ENCODE measurements at regions of chr7 and their contacts with region 1.

Region 1: GRCh38 chr7:143263266-143264195 is at the start of gene GSTK1:
- DNase-seq: peak; percentile 92
- H3K4me3 ChIP-seq: peak within 1 kb of the TSS; percentile 70
- H3K27ac ChIP-seq: peak within 1 kb of the TSS; percentile 93
- H3K4me1 ChIP-seq: peaks cover 14% of the 10 kb centered on the region
- H3K27me3 ChIP-seq: no peaks in the 10 kb centered on the region
- CTCF ChIP-seq: no peak
- total RNA-seq, gene GSTK1: 210 to 272 TPM

Region 2: DNA sequence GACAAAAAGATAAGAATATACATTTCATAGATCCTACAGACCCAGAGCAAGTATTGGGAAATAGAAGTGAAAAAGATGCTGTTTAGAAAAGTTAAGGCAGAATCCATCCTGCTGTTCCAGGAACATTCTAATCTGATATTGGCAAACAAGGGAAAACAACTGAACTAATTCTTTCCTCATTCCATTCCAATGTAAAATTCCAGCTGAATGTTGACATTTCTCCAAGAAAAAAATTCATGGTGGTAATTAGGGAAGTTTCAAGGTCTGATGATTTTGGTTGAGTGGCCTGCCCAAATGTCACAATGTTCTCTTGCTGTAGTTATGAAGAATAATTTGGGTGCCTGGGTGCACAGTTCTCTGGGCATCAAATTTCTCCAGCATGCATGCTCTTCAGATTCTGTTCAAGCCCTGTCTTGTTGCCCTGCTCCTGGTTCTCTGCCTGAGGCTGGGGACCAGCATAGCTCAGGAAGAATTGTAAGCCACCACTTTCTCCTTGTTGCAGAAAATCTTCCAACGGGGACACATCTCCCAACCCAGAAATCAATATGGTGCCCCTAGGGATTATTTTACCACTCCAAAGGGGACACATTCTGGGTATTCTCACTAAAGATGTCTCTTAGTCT is 116.3 kb before region 1 on chr7:
- intact Hi-C with region 1: no loop called
- DNase-seq: no peak
- H3K4me3 ChIP-seq: no peak overlapping the region
- H3K27ac ChIP-seq: no peak overlapping the region
- H3K4me1 ChIP-seq: no peaks in the 10 kb centered on the region
- H3K27me3 ChIP-seq: no peaks in the 10 kb centered on the region
- CTCF ChIP-seq: no peak

Region 3: GRCh38 chr7:143318656-143319055 is 55.1 kb after region 1 on chr7:
- intact Hi-C with region 1: no loop called
- DNase-seq: no peak
- H3K4me3 ChIP-seq: no peak overlapping the region
- H3K27ac ChIP-seq: no peak overlapping the region
- H3K4me1 ChIP-seq: no peaks in the 10 kb centered on the region
- H3K27me3 ChIP-seq: no peaks in the 10 kb centered on the region
- CTCF ChIP-seq: no peak

Region 4: GRCh38 chr7:143380255-143380645 is 116.7 kb after region 1 on chr7:
- intact Hi-C with region 1: loop called (anchors 10 kb)
- DNase-seq: peak; percentile 92
- H3K4me3 ChIP-seq: peak overlapping the region; percentile 89
- H3K27ac ChIP-seq: peak overlapping the region; percentile 100
- H3K4me1 ChIP-seq: peaks cover 7% of the 10 kb centered on the region
- H3K27me3 ChIP-seq: no peaks in the 10 kb centered on the region
- CTCF ChIP-seq: peak; percentile 89

Region 5: DNA sequence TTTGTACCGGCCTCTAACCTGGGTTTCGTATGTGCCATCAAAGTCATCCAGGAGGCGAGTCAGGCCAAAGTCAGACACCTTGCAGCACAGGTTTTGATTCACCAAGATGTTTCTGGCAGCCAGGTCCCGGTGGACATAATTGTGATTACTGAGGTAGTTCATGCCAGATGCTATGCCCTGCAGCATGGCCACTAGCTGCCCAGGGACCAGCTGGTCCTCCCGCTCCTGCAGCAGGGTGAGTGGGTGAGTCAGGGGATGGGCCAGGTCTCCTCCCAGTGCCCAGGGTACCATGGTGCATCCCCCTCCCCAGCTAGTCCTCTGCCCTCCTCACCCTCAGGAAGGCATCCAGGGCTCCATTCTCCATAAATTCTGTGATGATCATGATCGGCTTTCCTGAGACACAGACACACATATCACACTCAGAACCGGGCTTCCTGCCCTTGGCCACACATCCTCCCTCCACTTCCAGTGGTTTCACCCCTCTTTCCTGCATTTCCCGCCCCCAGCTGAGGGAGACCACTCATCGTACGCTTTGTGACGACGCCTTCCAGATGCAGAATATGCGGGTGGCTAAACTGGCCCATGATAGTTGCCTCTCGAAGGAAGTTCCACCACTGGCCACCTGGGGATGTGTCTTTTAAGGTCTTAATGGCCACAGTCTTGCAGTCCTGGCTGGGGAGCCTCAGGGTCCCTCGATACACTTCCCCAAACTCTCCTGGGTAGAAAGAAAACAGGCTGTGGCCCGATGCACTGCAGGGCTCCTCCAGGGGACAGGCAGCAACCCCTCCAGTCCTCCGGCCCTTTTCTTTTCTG is 131.5 kb after region 1 on chr7:
- intact Hi-C with region 1: no loop called
- DNase-seq: no peak
- H3K4me3 ChIP-seq: no peak overlapping the region
- H3K27ac ChIP-seq: no peak overlapping the region
- H3K4me1 ChIP-seq: peaks cover 6% of the 10 kb centered on the region
- H3K27me3 ChIP-seq: no peaks in the 10 kb centered on the region
- CTCF ChIP-seq: no peak

Measured in colonic mucosa (tissue), 4 donors.